ENCODE measurements at regions of chr6 and their contacts with region 1.

Region 1: GRCh38 chr6:158660333-158660754 is 10.5 kb downstream of the SYTL3 start:
- DNase-seq: peak; percentile 67

Region 2: DNA sequence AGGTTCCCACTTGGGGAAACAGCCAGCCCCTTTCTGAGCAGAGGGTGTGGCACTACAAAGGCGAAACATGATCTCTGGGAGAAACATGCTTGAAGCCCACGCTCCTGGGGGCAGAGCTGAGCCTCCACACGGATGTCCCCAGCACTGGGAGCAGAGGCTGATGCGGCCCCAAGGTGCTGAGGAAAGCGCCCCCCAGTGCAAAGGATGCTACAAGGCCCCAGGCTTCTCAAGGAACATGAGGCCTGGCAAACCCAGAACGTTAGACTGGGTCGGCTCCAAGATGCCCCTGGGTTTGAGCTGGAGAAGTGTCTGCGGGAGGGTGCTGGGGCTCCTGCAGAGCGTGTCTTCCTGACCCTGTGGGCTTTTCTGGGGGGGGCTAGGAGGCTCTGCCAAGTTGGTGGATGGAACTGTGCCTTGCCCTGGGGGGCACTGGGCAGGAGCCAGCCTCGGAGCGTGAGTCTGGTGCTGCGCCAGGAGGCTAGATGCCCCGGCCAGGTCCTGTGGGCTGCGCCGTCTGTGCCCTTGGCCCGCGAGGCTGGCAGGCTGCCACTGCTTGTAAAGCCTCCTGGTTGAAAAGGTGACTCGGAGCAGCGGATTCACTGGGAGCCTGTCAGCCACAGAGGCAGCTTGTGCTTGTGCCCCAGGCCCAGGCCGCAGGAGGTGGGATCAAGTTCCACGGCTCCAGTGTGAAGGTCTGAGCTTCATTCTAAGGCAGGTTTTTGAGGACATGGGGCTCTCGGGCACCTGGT is 670.6 kb before region 1 on chr6:
- CTCF ChIA-PET with region 1: no interaction called
- POLR2A ChIA-PET with region 1: no interaction called
- DNase-seq: no peak

Region 3: DNA sequence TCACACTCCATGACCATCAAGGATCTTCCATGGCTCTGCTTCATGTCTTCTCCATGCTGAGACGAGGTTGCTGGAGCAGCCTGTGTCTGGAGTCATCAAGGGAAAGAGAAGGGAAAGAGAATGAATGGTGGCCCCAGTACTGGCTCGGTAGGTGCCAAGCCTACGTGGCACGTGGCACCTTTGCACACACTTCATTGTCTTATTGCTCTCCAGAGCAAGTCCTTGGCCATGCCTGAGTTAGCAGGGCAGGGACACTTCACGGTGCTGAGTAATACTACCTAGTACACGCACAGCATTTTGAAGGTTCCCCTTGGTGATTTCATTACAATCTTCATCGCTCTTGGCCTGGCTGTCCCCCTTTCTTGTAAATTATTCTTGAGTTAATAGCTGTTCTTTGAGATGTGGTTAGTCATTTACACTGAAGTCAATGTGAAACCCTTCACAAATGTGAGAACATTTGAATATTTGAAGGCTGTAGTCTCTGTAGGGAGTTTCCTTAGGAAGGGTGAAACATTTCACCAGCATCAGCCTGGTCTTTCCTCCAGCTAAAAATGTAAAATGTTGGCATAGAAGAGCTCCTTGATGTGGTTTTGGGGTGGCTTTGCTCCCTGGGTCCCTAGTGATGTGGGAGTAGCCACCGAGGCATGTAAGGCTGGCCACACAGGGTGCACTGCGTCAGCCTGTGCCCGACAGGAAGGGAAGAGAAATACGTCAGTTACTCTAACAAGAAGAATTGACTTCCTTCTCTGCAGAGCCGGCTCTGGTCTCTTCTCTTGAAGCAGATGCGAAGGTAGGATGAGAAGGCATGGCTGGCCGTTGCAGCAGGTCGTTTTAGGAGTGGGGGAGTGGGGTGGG is 10.8 kb before region 1 on chr6 and contains the start of gene SYTL3:
- CTCF ChIA-PET with region 1: interaction called, 12 read pairs
- POLR2A ChIA-PET with region 1: interaction called, 11 read pairs
- DNase-seq: no peak

Region 4: DNA sequence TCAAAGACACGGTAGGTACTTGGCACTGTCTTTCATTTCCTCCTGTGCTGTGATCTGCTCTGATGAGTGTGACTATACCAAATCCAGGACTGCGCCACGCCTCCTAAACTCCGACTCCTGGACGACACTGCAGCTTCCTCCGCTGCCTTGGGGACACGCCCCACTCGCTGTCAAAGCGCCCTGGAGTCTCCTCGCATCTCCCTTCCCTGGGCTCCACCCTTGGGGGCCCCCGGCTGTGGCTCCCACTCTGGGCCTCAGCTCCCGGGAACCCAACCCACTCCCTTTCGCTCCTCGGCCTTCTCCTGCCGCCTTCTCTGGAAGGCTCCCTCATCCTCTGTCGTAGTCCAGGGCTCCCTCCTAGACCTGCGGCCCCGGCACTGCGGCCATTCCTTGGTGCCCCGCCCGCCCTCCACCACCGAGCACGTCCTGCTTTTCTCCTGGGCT is 278.5 kb after region 1 on chr6:
- CTCF ChIA-PET with region 1: no interaction called
- POLR2A ChIA-PET with region 1: no interaction called
- DNase-seq: no peak

Measured in HEK293T (cell line).